Vagina (tissue), 2 donors: ENCODE measurements at regions of chr19 and their contacts with region 1.

Region 1: GRCh38 chr19:9757544-9758501 is 10.7 kb downstream of the ZNF846 start:
- DNase-seq: no peak
- H3K4me3 ChIP-seq: no peak overlapping the region
- H3K27ac ChIP-seq: no peak overlapping the region
- H3K4me1 ChIP-seq: no peaks in the 10 kb centered on the region
- H3K27me3 ChIP-seq: no peaks in the 10 kb centered on the region
- CTCF ChIP-seq: no peak
- POLR2A ChIP-seq: no peak

Region 2: DNA sequence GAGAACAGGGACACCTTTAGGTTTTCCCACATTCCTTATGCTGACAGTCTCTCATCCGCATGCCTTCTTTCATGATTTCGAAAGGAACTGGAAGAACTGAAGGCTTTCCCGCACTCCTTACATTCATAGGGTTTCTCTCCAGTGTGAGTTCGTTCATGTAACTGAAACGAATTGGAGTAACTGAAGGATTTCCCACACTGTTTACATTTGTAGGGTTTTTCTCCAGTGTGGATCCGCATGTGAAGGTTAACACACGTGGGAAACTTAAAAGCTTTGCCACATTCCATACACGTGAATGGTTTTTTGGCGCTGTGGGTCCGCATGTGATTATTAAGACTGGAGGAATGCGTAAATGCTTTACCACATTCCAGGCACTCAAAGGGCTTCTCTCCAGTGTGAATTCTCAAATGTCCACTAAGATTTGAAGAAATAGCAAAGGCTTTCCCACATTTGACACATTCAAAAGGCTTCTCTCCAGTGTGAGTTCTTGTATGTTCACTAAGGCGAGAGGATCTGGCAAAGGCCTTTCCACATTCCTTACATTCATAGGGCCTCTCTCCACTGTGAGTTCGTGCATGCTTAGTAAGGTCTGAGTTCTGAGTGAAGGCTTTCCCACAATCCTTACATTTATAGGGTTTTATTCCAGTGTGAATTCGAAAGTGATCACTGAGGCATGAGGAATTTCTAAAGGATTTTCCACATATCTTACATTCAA is 344.4 kb before region 1 on chr19:
- intact Hi-C with region 1: loop called (anchors 5 kb)
- DNase-seq: no peak
- H3K4me3 ChIP-seq: no peak overlapping the region
- H3K27ac ChIP-seq: no peak overlapping the region
- H3K4me1 ChIP-seq: no peaks in the 10 kb centered on the region
- H3K27me3 ChIP-seq: no peaks in the 10 kb centered on the region
- CTCF ChIP-seq: no peak
- POLR2A ChIP-seq: no peak

Region 3: DNA sequence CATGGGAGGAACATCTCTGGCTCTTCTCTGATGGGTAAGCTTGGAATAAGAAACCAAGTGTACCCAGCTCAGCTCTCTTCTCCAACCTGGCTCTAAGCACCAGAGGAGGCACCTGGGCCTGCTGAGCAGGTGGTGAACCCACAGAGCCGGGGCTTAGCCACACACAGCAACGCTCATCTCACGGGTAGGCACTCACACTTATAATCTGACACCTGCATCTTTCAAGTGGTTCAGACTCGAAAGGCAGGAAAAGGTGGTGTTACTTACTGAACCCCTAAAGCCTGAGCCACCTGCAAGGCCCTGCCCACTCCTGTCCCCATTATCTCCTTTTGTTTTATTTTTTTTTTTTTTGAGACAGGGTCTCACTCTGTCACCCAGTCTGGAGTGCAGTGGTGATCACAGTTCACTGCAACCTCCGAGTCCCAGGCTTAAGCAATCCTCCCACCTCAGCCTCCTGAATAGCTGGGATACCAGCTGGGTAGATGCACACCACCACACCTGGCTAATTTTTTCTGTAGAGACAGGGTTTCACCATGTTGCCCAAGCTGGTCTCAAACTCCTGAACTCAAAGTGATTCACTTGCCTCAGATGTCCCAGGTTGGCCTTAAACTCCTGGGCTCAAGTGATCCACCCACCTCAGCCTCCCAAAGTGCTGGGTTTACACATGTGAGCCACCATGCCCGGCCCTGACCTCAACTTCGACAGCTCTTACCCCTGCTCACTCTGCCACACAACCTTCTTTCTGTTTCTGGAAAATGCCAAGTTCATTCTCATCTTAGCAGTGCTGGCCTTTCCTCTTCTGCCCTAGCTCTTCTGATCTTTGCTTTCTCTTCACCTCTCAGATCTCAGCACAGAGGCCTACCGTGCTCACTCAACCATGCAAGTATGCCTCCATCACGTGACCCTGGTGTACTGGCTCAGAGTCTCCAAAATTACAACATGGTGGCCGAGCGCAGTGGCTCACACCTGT is 51.3 kb after region 1 on chr19:
- intact Hi-C with region 1: no loop called
- DNase-seq: no peak
- H3K4me3 ChIP-seq: no peak overlapping the region
- H3K27ac ChIP-seq: no peak overlapping the region
- H3K4me1 ChIP-seq: no peaks in the 10 kb centered on the region
- H3K27me3 ChIP-seq: no peaks in the 10 kb centered on the region
- CTCF ChIP-seq: no peak
- POLR2A ChIP-seq: no peak

Region 4: DNA sequence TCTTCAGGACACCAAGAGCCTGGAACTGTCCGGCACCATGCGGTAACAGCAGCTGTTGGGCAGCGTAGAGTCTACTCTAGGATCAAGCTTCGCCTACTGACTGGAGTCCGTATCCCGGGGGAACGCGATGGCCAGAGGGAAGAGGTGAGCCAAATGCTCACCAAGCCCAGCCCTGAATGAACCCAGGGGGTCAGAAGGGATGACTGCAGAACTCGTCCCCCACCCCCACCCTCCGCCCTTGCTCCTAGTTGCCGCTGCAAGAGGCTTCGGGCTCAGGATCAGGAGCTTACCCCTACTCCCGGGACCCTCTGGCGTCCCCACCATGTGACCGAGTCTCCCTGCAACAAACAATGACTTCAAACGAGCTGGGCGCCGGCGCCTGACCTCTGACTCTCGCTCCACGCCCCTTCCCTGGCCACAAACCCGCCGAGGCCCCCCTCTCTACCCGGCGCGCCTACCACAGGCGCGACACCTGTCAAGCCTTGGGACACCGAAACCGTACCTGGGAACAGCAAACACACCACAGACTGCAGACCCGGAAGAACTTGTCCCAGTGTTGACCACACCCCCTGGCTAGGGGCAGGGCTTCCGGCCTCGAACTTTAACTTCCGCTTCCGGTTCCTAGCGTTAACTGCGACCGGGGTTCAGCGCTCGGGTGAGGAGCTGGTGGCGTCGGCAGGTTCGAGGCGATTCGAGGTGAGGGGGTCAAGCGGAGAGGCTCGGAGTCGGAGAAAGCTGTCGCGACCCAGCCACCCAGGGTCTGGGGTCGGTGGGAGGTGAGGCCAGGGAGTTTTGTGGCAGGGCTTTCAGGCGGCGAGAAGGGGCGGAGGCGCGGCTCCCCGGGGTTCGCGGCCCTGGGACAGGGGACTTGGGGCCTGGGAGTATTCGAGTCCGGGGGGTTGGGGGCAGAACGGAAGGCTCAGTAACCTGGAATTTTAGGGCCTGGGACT is 69.7 kb after region 1 on chr19 and contains the start of gene UBL5:
- intact Hi-C with region 1: no loop called
- DNase-seq: no peak
- H3K4me3 ChIP-seq: peak within 1 kb of the TSS; percentile 91
- H3K27ac ChIP-seq: peak within 1 kb of the TSS; percentile 79
- H3K4me1 ChIP-seq: peaks cover 29% of the 10 kb centered on the region
- H3K27me3 ChIP-seq: no peaks in the 10 kb centered on the region
- CTCF ChIP-seq: no peak
- POLR2A ChIP-seq: peak in 1 of 2 donors; percentile 64
- total RNA-seq, gene UBL5: 269 TPM

Region 5: DNA sequence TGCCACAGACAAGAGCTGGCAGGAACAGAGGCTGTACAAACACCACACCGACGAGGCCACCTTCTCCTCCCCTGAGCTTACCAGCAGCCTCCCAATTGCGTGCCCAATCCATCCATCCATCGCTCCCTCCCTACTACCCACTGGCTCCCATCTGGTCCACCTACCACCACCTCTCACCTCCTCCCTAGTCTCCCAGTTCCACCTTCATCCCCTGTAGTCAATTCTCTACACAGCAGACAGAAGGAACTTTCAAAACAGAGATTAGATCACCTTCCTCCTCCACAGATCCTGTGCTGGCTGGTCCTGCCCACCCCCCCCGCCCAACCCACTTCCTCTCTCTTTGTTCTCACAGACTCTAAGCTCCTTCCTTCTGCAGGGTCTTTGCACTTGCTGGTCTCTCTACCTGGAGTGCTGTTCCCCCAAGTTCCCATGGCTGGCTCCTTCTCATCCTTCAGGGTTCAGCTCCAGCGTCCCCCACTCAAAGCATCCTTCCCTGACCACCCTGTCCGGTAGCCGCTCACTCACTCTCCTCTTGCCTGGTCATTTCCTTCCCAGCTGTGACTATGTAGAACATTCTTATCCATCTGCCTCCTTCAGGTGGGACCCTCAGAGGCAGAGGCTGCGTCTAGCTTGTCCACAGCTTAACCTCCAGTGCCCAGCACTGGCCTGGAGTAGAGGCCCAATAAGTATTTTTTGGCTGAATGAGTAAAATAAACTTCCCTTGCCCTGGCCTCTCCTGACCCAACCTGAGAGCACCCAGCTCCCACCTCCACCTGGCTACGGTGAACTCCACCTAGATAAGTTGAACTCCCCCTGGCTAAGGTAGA is 100.3 kb after region 1 on chr19:
- intact Hi-C with region 1: no loop called
- DNase-seq: no peak
- H3K4me3 ChIP-seq: no peak overlapping the region
- H3K27ac ChIP-seq: no peak overlapping the region
- H3K4me1 ChIP-seq: no peaks in the 10 kb centered on the region
- H3K27me3 ChIP-seq: no peaks in the 10 kb centered on the region
- CTCF ChIP-seq: no peak
- POLR2A ChIP-seq: no peak